ENCODE measurements at regions of chr1 and their contacts with region 1.

Region 1: GRCh38 chr1:8987881-8988617 is 38.2 kb downstream of the SLC2A7 start:
- DNase-seq: peak; percentile 60
- ATAC-seq: peak; percentile 67

Region 2: DNA sequence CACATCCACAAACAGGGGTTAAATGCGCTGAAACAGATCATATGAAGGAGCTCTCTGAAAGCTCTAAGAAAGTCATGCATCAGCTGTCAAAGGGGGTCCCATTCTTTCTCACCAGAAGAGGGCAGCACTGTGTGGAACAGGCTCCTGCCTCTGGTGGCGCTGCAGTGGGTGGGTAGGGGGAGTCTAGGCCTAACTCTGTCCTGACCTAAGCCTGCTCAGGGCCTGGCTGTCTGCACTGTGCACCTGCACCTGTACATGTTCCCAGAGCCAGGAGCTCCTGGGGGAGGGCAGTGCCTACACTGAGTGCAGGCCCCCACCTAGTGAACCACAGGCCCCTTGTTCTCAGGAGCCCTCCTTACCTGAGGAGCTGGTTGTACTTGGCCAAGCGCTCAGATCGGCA is 125.5 kb before region 1 on chr1:
- intact Hi-C with region 1: loop called in 1 of 2 experiments (anchors 5 kb)
- DNase-seq: no peak
- ATAC-seq: no peak

Region 3: GRCh38 chr1:8913111-8913856 is 74.8 kb before region 1 on chr1:
- intact Hi-C with region 1: loop called (anchors 1 to 5 kb)
- DNase-seq: no peak
- ATAC-seq: no peak

Measured in left cardiac atrium (tissue), 4 donors.